Activated B cell treated with CpG ODN at 0.5 μM for 24 hours (primary cell): ENCODE measurements at regions of chr14 and their contacts with region 1.

Region 1: GRCh38 chr14:21476925-21477681 is at the starts of genes RAB2B and TOX4:
- DNase-seq: peak; percentile 84
- ATAC-seq: peak; percentile 96
- H3K4me3 Mint-ChIP-seq: peak within 1 kb of the TSS; percentile 99
- H3K27ac Mint-ChIP-seq: peak within 1 kb of the TSS; percentile 95
- H3K4me1 Mint-ChIP-seq: peaks cover 37% of the 10 kb centered on the region
- H3K27me3 Mint-ChIP-seq: no peaks in the 10 kb centered on the region
- CTCF ChIP-seq: no peak
- total RNA-seq, gene RAB2B: 25.0 and 27.5 TPM in 2 replicates
- total RNA-seq, gene TOX4: 77.2 and 81.4 TPM in 2 replicates

Region 2: DNA sequence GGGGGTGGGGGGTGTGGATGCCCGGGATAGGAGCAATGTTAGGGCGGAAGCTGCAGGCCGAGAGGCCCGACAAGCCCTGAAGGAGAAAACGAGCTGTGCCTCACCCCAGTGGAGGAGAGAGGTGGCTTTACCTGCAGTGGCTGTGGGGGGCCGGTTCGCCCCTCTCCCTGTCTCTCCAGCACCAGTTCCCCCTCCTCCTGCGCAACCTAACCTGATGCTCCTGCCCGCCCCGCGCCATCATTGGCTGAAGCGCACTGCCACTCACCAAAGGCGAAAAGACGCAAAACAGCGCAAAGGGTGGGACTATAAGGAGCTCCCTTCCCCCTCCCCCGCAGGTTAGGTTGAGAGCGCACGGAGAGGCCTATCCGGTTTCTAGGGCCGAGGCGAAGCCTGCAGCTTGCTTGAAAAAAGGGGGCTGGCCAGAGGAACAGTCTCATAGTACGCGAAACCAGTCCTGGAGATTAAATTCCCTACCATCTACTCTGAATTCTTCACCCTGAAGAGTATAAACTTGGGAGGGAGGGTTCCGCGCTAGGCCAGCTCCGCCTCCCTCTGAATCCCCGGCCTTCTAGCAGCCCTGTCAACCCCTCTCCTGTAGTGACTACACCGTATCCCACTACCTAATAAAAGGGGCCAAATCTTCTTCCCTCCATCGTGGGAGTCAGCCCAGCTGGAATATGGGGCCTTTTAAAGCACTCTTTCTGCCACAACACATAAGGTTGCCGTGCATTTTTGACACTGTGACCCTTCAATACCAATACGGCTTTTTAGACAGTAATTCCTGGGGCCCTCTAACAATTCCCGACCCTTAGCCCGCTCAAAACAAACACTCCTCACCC is 39.8 kb before region 1 on chr14:
- CTCF ChIA-PET with region 1: no interaction called
- POLR2A ChIA-PET with region 1: interaction called, 32 read pairs
- intact Hi-C with region 1: loop called (anchors 1 kb)
- DNase-seq: peak; percentile 96
- ATAC-seq: peak; percentile 99
- H3K4me3 Mint-ChIP-seq: peak overlapping the region; percentile 84
- H3K27ac Mint-ChIP-seq: peak overlapping the region; percentile 87
- H3K4me1 Mint-ChIP-seq: peaks cover 56% of the 10 kb centered on the region
- H3K27me3 Mint-ChIP-seq: no peaks in the 10 kb centered on the region
- CTCF ChIP-seq: no peak

Region 3: GRCh38 chr14:21536418-21537089 is 59.5 kb after region 1 on chr14:
- CTCF ChIA-PET with region 1: no interaction called
- POLR2A ChIA-PET with region 1: no interaction called
- intact Hi-C with region 1: no loop called
- DNase-seq: no peak
- ATAC-seq: no peak
- H3K4me3 Mint-ChIP-seq: peak overlapping the region; percentile 25
- H3K27ac Mint-ChIP-seq: no peak overlapping the region
- H3K4me1 Mint-ChIP-seq: peaks cover 13% of the 10 kb centered on the region
- H3K27me3 Mint-ChIP-seq: peaks cover 57% of the 10 kb centered on the region
- CTCF ChIP-seq: no peak